ENCODE measurements at regions of chr15 and their contacts with region 1.

Region 1: DNA sequence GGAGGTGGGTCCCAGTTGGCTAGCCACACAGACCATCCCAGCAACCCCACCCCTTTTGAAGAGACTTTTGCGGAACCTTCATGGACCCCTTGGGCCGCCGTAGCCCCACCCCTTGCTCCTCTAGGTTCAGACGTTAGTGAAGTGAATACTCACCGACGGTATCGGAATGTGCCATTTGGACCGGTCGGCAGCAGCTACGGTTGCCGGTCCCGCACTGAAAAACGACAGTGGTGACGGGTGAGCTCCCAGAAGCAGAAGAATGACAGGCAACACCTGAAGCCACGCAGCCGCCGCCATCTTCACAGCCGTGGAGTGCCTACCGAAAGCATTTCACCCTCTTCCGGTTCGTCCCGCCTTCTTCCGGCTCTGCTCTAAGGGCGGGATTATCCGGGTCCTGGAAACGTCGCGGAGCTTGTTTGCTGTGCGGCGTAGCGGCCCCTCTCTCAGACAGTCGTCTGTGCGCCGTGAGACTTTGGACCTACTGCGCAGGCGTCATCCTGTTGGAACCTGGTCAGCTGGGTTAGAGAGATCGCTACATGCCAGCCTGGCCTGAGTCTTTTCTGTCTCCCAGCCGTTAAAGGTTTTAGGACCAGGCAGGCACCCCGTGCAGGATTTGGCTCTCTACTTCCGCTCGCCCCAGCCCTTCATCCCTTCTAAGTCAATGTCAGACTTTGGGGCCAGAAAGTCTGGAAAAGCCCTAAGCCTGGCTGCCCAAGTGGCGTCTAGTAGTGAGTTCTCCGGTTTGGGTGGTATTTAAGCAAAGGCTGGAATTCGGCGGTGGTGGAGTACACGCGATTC is at the starts of genes GANC and TMEM87A:
- DNase-seq: peak; percentile 97
- H3K4me3 ChIP-seq: peak within 1 kb of the TSS; percentile 84
- H3K27ac ChIP-seq: peak within 1 kb of the TSS; percentile 86
- H3K4me1 ChIP-seq: peaks cover 37% of the 10 kb centered on the region
- CTCF ChIP-seq: no peak
- total RNA-seq, gene GANC: 25.4 and 27.9 TPM in 2 replicates
- total RNA-seq, gene TMEM87A: 21.4 and 23.2 TPM in 2 replicates

Region 2: GRCh38 chr15:41462084-41462795 is 811.1 kb before region 1 on chr15:
- CTCF ChIA-PET with region 1: no interaction called
- POLR2A ChIA-PET with region 1: no interaction called
- intact Hi-C with region 1: no loop called
- DNase-seq: no peak
- H3K4me3 ChIP-seq: no peak overlapping the region
- H3K27ac ChIP-seq: no peak overlapping the region
- H3K4me1 ChIP-seq: no peaks in the 10 kb centered on the region
- CTCF ChIP-seq: no peak

Region 3: GRCh38 chr15:42207674-42208579 is 65.4 kb before region 1 on chr15 and contains the start of gene VPS39:
- CTCF ChIA-PET with region 1: no interaction called
- POLR2A ChIA-PET with region 1: interaction called, 10 read pairs
- intact Hi-C with region 1: no loop called
- DNase-seq: peak; percentile 83
- H3K4me3 ChIP-seq: peak within 1 kb of the TSS; percentile 98
- H3K27ac ChIP-seq: peak within 1 kb of the TSS; percentile 23
- H3K4me1 ChIP-seq: peaks cover 18% of the 10 kb centered on the region
- CTCF ChIP-seq: no peak
- total RNA-seq, gene VPS39: 25.1 and 27.5 TPM in 2 replicates

Region 4: DNA sequence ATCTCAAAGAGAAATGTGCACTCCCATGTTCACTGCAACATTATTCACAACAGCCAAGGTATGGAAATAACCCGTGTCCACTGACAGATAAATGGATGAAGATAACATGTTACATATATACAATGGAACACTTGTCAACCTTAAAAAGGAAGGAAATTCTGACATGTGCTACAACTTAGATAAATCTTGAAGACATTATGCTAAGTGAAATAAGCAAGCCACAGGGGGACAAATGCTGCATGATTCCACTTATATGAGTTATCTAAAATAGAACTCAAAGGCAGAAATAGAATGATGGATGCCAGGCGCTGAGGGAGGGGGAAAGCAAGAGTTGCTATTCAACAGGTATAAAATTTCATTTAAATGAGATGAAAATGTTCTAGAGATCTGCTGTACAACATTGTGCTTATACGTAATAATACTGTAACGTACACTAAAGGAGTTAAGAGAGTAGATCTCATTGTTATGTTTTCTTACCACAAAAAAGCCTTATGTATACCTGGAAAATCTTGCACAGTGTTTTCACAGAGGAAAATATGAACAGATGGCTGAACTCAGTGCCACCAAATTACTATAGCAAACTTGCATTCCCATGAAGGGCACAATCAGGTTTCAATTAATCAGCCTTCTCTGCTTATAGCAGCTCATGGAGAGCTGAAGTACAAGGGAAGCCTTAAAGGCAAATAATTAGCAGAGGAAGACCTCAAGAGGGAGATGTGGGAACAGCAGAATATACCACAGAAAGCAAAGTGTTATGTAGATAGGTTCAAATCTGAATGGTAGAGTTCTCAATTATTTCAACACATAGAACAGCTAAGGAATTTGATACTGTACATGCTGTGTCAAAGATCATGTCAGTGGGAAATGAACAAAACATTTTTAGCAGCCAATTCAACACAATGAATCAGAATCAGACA is 57.1 kb before region 1 on chr15:
- CTCF ChIA-PET with region 1: no interaction called
- POLR2A ChIA-PET with region 1: no interaction called
- intact Hi-C with region 1: loop called (anchors 5 kb)
- DNase-seq: peak; percentile 13
- H3K4me3 ChIP-seq: no peak overlapping the region
- H3K27ac ChIP-seq: no peak overlapping the region
- H3K4me1 ChIP-seq: peaks cover 27% of the 10 kb centered on the region
- CTCF ChIP-seq: no peak

Region 5: DNA sequence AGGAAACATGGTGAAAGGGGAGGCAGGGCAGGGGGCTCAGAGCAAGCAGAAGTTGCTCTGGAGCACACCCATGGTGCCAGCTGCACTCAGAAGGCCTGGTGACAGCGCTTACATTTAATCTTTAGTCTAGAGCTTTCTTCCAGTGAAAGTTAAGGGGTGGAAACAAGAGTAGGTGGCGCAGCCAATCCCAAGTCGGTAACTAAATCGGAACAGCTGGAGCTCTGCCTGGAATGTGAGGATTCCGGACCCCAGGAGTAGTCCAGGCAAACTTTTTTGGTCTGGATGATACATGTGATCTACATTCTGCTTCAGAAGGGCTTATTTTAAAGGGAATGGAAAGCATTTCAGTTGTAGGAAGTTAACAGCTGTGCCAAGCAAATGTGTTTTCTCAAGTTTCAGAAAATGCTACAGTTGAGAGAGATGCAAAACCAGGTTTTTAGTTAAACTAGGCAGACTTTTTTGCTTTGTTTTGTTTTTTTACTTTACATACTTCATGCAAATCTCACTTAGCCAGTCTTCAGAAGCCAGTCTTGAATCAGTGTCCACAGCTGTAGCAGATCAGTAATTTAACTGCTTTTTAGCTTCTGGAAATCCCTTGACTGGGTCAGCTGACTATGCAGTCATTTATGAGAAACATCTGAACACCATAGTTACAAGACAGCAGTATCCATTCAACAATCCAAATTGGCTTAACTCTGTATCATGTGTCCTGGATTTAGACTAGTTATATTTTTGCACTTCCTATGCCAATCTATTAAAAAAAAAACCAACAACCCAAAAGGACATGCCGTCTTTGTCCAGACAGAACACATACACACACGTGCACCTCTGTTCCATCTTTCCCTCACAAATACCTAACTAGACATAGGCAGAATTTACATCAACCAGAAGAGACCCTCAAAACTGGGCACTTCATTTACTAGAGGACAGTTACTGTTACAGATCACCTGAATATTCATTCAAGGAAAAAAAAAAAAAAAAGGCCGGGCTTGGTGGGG is 184.4 kb after region 1 on chr15:
- CTCF ChIA-PET with region 1: no interaction called
- POLR2A ChIA-PET with region 1: no interaction called
- intact Hi-C with region 1: loop called (anchors 2 kb)
- DNase-seq: peak; percentile 87
- H3K4me3 ChIP-seq: peak overlapping the region; percentile 66
- H3K27ac ChIP-seq: peak overlapping the region; percentile 91
- H3K4me1 ChIP-seq: peaks cover 67% of the 10 kb centered on the region
- CTCF ChIP-seq: no peak

Region 6: GRCh38 chr15:42548253-42549031 is 275.1 kb after region 1 on chr15 and contains the starts of genes HAUS2 and LRRC57:
- CTCF ChIA-PET with region 1: no interaction called
- POLR2A ChIA-PET with region 1: no interaction called
- intact Hi-C with region 1: loop called (anchors 10 kb)
- DNase-seq: peak; percentile 90
- H3K4me3 ChIP-seq: peak within 1 kb of the TSS; percentile 98
- H3K27ac ChIP-seq: peak within 1 kb of the TSS; percentile 71
- H3K4me1 ChIP-seq: peaks cover 45% of the 10 kb centered on the region
- CTCF ChIP-seq: no peak
- total RNA-seq, gene HAUS2: 44.9 and 50.4 TPM in 2 replicates
- total RNA-seq, gene LRRC57: 17.9 and 18.5 TPM in 2 replicates